ENCODE measurements at regions of chr16 and their contacts with region 1.

Region 1: GRCh38 chr16:57519796-57520360 is 16.5 kb downstream of the CCDC102A start:
- DNase-seq: no peak
- H3K4me3 ChIP-seq: no peak overlapping the region
- H3K27ac ChIP-seq: no peak overlapping the region
- H3K4me1 ChIP-seq: peaks cover 3 to 8% (median 5%) of the 10 kb centered on the region in 3 donors
- H3K27me3 ChIP-seq: no peaks in the 10 kb centered on the region
- CTCF ChIP-seq: peak; percentile 90 to 96 (median 92)
- POLR2A ChIP-seq: no peak

Region 2: GRCh38 chr16:57475711-57476339 is 44.1 kb before region 1 on chr16:
- intact Hi-C with region 1: loop called (anchors 10 kb)
- DNase-seq: no peak
- H3K4me3 ChIP-seq: no peak overlapping the region
- H3K27ac ChIP-seq: peak overlapping the region in 1 of 4 donors; percentile 34
- H3K4me1 ChIP-seq: peaks cover 23 to 57% (median 27%) of the 10 kb centered on the region in 3 donors
- H3K27me3 ChIP-seq: no peaks in the 10 kb centered on the region
- CTCF ChIP-seq: peak in 4 of 6 experiments; percentile 20 to 36 (median 30)
- POLR2A ChIP-seq: no peak

Measured in esophagus squamous epithelium (tissue), 5 donors.